Tibial artery (tissue), 4 donors: ENCODE measurements at regions of chr11 and their contacts with region 1.

Region 1: GRCh38 chr11:117843666-117844484 is 19.3 kb upstream of the FXYD2 start:
- DNase-seq: peak; percentile 80 to 81
- H3K4me3 ChIP-seq: no peak overlapping the region
- H3K27ac ChIP-seq: no peak overlapping the region
- H3K4me1 ChIP-seq: peaks cover 0 to 3% (median 0%) of the 10 kb centered on the region in 4 donors
- H3K27me3 ChIP-seq: no peaks in the 10 kb centered on the region
- CTCF ChIP-seq: peak; percentile 94 to 97

Region 2: DNA sequence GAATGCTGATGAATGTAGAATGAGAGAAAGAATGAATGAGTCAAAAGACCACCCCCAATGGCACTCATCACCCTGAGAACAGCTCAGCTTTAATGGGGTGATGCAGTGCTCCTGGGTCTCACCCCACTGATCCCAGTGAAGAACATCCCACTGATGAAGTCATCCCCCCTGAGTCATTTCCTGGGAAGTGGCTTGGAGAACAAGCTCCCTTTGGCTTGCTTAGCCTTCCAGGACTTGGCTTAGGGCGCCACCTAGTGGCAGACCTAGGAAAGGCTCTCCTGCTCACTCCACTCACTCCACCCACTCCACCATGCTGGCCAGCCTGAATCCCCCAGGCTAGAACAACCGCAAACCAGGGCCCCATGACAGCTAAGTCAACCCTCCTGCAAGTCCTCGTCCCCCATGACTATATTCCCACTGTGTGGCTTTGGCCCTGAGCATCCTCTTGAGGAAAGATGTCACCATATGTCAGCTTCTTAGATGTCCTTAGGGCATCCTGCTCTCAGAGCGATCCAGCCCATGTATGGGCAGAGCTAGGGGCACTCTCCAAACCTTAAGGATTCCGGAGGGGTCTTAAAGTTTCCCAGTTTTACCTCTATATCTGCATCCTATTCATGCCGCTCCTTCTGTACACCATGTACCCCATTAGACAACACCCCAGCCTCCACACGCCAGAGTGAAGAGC is 103.1 kb after region 1 on chr11:
- intact Hi-C with region 1: loop called (anchors 5 kb)
- DNase-seq: peak; percentile 80 to 88
- H3K4me3 ChIP-seq: no peak overlapping the region
- H3K27ac ChIP-seq: no peak overlapping the region
- H3K4me1 ChIP-seq: no peaks in the 10 kb centered on the region
- H3K27me3 ChIP-seq: peaks cover 0 to 17% of the 10 kb centered on the region in 2 donors
- CTCF ChIP-seq: peak; percentile 81 to 92

Region 3: DNA sequence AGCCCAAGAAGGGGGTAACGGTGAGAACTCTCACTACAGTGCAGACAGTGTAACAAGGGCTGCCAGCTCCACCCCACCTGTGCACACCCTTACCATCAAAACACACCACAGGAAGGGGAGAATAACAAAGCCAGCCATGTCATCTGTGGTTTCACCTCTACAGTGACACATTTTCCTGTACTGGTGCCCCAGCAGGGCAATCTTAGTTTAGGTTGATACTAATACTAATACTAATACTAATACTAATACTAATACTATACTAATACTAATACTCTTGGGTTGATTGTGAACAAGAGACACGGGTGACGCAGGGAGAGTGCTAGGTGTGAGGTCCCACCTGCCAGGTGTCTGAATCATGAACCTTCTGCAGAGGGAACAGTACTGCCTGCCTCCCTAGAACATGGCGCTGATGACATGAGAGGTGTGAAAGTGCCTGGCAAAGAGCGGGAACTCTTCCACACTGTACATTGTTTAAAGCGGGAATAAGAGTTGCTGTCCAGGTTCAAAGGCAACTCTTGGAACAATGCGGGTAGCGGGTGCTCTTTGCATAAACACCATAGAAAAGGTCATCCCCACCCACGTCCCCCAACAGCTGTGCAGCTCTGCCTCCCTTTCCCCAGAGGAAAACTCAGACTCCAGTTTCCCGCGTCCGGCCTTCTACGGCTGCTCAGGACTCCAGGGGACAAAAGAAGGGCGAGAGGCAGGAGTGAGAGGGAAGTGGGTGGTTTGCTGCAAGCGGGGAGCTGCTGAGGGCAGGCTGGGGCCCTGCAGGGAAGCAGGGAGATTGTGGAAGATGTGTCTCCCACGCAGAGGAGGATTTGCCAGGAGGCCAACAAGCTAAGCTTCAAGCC is 208.0 kb after region 1 on chr11:
- intact Hi-C with region 1: loop called (anchors 5 kb)
- DNase-seq: peak in 1 of 2 donors; percentile 57
- H3K4me3 ChIP-seq: no peak overlapping the region
- H3K27ac ChIP-seq: no peak overlapping the region
- H3K4me1 ChIP-seq: no peaks in the 10 kb centered on the region
- H3K27me3 ChIP-seq: no peaks in the 10 kb centered on the region
- CTCF ChIP-seq: no peak

Region 4: GRCh38 chr11:118156531-118157185 is 312.8 kb after region 1 on chr11:
- intact Hi-C with region 1: no loop called
- DNase-seq: no peak
- H3K4me3 ChIP-seq: no peak overlapping the region
- H3K27ac ChIP-seq: no peak overlapping the region
- H3K4me1 ChIP-seq: peaks cover 0 to 24% (median 16%) of the 10 kb centered on the region in 4 donors
- H3K27me3 ChIP-seq: peaks cover 0 to 93% of the 10 kb centered on the region in 2 donors
- CTCF ChIP-seq: no peak